ENCODE measurements at regions of chr12 and their contacts with region 1.

Region 1: DNA sequence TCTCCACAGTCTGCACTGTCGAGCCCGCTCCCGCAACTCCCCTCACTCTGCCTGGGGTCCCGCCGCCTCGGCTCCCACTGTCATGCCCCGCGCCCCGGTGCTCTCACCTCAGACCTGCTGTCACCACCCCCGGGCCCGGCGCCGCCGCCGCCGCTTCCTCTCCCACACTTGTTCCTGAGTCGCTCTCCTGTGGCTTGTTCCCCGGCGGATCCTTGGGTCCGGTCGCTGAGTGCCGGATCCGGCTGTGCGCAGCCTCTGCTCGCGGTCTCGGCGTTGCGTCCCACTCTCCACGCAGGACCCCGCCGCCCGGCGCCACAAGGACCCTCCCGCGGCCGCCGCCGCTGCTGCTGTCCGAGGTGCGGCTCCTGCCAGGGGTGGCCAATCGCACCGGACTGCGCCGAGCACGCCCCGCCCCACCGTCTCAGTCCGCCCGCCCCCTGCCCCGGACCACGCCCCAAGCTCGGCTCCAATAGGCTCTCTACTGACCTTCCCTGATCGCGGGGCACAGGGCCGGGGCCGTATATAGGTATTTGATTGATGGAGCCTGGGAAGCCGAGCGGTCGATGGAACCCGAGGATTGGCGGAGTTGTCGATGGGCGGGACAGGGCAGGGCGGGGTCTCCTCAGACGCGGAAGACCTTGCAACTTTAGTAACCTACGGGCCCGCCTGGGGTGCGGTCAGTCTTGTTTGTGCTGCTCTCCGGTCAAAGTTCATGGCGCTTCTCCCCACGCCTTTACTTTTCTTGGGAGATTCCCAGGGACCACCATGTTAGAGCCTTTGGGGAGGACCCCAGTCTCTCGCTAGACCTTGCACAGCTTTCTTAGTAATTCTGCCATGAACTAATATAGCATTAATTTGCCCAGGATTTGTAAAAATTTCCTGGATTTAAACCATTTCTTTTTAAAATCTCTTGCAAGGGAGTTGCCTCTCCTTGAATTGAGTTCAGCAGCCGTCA is at the start of gene TAOK3:
- DNase-seq: peak; percentile 98
- ATAC-seq: peak; percentile 89
- H3K4me3 Mint-ChIP-seq: peak within 1 kb of the TSS; percentile 92
- H3K27ac Mint-ChIP-seq: peak within 1 kb of the TSS; percentile 85
- H3K4me1 Mint-ChIP-seq: peaks cover 47% of the 10 kb centered on the region
- H3K27me3 Mint-ChIP-seq: peaks cover 3% of the 10 kb centered on the region
- total RNA-seq, gene TAOK3: 57.1 to 61.4 TPM

Region 2: GRCh38 chr12:117874842-117875434 is 497.9 kb before region 1 on chr12:
- CTCF ChIA-PET with region 1: interaction called, 16 read pairs
- POLR2A ChIA-PET with region 1: no interaction called
- DNase-seq: peak; percentile 68
- ATAC-seq: peak; percentile 68
- H3K4me3 Mint-ChIP-seq: no peak overlapping the region
- H3K27ac Mint-ChIP-seq: no peak overlapping the region
- H3K4me1 Mint-ChIP-seq: peaks cover 6% of the 10 kb centered on the region
- H3K27me3 Mint-ChIP-seq: peaks cover 9% of the 10 kb centered on the region

Region 3: GRCh38 chr12:118061011-118061875 is 311.6 kb before region 1 on chr12 and contains the start of gene WSB2:
- CTCF ChIA-PET with region 1: interaction called, 24 read pairs
- POLR2A ChIA-PET with region 1: interaction called, 6 read pairs
- DNase-seq: peak; percentile 64
- ATAC-seq: peak; percentile 27
- H3K4me3 Mint-ChIP-seq: peak within 1 kb of the TSS; percentile 94
- H3K27ac Mint-ChIP-seq: peak within 1 kb of the TSS; percentile 94
- H3K4me1 Mint-ChIP-seq: peaks cover 59% of the 10 kb centered on the region
- H3K27me3 Mint-ChIP-seq: no peaks in the 10 kb centered on the region
- total RNA-seq, gene WSB2: 44.6 to 45.0 TPM

Region 4: GRCh38 chr12:118135788-118136558 is 236.8 kb before region 1 on chr12 and contains the start of gene PEBP1:
- CTCF ChIA-PET with region 1: interaction called, 17 read pairs
- POLR2A ChIA-PET with region 1: interaction called, 8 read pairs
- DNase-seq: peak; percentile 95
- ATAC-seq: peak; percentile 100
- H3K4me3 Mint-ChIP-seq: peak within 1 kb of the TSS; percentile 94
- H3K27ac Mint-ChIP-seq: peak within 1 kb of the TSS; percentile 91
- H3K4me1 Mint-ChIP-seq: peaks cover 28% of the 10 kb centered on the region
- H3K27me3 Mint-ChIP-seq: no peaks in the 10 kb centered on the region
- total RNA-seq, gene PEBP1: 115 to 118 TPM

Region 5: GRCh38 chr12:118175823-118176447 is 196.9 kb before region 1 on chr12:
- CTCF ChIA-PET with region 1: interaction called, 107 read pairs
- POLR2A ChIA-PET with region 1: no interaction called
- DNase-seq: no peak
- ATAC-seq: no peak
- H3K4me3 Mint-ChIP-seq: no peak overlapping the region
- H3K27ac Mint-ChIP-seq: no peak overlapping the region
- H3K4me1 Mint-ChIP-seq: no peaks in the 10 kb centered on the region
- H3K27me3 Mint-ChIP-seq: no peaks in the 10 kb centered on the region

Region 6: DNA sequence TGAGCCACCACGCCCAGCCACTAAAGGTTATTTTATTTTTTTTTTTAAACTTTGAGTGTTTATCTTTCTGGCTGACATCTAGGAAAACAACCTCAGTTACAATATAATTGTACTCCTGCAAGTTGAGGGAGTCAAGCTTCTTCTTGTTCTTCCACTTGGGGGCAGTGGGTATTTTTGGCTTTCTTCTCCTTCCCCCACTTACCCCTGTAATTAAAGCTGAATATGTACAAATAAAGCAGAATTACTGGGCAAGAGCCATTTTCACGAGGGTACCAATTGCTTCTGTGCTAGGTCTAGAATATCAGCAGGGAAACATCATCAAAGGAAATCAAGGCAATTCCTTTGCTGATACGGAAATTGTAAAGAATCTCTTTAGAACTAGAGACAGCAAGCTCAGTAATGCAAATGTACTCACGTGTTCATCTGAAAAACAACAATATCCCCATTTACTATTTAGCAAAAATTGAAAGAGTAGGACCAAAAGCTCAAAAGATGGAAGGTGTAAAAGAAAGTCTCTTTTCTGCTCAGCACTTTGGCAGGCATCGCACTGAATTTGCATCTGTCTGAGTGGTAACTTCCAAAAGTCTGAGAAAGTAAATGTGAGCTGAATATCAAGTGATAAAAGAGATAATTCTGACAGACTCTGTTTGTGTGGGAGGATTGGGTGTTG is 72.9 kb before region 1 on chr12:
- CTCF ChIA-PET with region 1: interaction called, 17 read pairs
- POLR2A ChIA-PET with region 1: no interaction called
- DNase-seq: no peak
- ATAC-seq: no peak
- H3K4me3 Mint-ChIP-seq: no peak overlapping the region
- H3K27ac Mint-ChIP-seq: no peak overlapping the region
- H3K4me1 Mint-ChIP-seq: peaks cover 21% of the 10 kb centered on the region
- H3K27me3 Mint-ChIP-seq: no peaks in the 10 kb centered on the region

Region 7: GRCh38 chr12:118357257-118358007 is 15.4 kb before region 1 on chr12:
- CTCF ChIA-PET with region 1: interaction called, 146 read pairs
- POLR2A ChIA-PET with region 1: interaction called, 35 read pairs
- DNase-seq: peak; percentile 69
- ATAC-seq: peak; percentile 74
- H3K4me3 Mint-ChIP-seq: peak overlapping the region; percentile 88
- H3K27ac Mint-ChIP-seq: peak overlapping the region; percentile 83
- H3K4me1 Mint-ChIP-seq: peaks cover 41% of the 10 kb centered on the region
- H3K27me3 Mint-ChIP-seq: no peaks in the 10 kb centered on the region

Region 8: GRCh38 chr12:118436002-118436730 is 63.3 kb after region 1 on chr12:
- CTCF ChIA-PET with region 1: no interaction called
- POLR2A ChIA-PET with region 1: no interaction called
- DNase-seq: no peak
- ATAC-seq: no peak
- H3K4me3 Mint-ChIP-seq: no peak overlapping the region
- H3K27ac Mint-ChIP-seq: no peak overlapping the region
- H3K4me1 Mint-ChIP-seq: no peaks in the 10 kb centered on the region
- H3K27me3 Mint-ChIP-seq: no peaks in the 10 kb centered on the region

Region 9: GRCh38 chr12:118463677-118464076 is 90.9 kb after region 1 on chr12:
- CTCF ChIA-PET with region 1: no interaction called
- POLR2A ChIA-PET with region 1: no interaction called
- DNase-seq: no peak
- ATAC-seq: no peak
- H3K4me3 Mint-ChIP-seq: no peak overlapping the region
- H3K27ac Mint-ChIP-seq: no peak overlapping the region
- H3K4me1 Mint-ChIP-seq: no peaks in the 10 kb centered on the region
- H3K27me3 Mint-ChIP-seq: no peaks in the 10 kb centered on the region